ENCODE measurements at regions of chr2 and their contacts with region 1.

Region 1: GRCh38 chr2:161122772-161123530 is 37.3 kb upstream of the TANK start:
- DNase-seq: peak; percentile 62
- H3K4me3 Mint-ChIP-seq: peak overlapping the region; percentile 17
- H3K27ac Mint-ChIP-seq: peak overlapping the region; percentile 58
- H3K4me1 Mint-ChIP-seq: peaks cover 24% of the 10 kb centered on the region
- H3K27me3 Mint-ChIP-seq: no peaks in the 10 kb centered on the region

Region 2: GRCh38 chr2:161136696-161137324 is 13.9 kb after region 1 on chr2:
- CTCF ChIA-PET with region 1: interaction called, 4 read pairs
- POLR2A ChIA-PET with region 1: interaction called, 5 read pairs
- intact Hi-C with region 1: loop called (anchors 1 kb)
- DNase-seq: peak; percentile 35
- H3K4me3 Mint-ChIP-seq: peak overlapping the region; percentile 96
- H3K27ac Mint-ChIP-seq: peak overlapping the region; percentile 100
- H3K4me1 Mint-ChIP-seq: peaks cover 45% of the 10 kb centered on the region
- H3K27me3 Mint-ChIP-seq: no peaks in the 10 kb centered on the region